CD4-positive, alpha-beta memory T cell (primary cell): ENCODE measurements at regions of chr4 and their contacts with region 1.

Region 1: DNA sequence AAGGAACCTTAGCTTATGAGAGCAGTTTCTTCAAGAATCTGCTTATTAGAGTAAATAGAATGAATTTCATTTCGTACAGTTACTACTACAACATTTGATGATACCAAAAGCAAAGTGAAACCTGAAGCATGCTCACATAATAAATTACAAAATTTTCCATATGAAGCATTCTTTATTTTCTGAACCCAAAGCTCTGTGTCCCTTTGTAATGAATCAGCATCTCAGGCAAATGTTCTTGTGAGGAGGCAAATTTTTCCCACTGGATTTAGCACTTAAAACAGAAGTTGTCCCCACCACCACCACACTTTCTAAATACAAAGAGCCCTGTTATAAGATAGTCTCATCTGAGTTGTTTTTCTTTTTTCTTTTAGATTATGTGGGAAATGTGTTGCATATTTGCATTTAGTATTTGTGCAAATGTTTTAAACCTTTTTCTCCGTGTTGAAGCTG is 70.7 kb upstream of the NFKB1 start:
- DNase-seq: no peak
- H3K4me3 ChIP-seq: peak overlapping the region; percentile 53 to 63
- H3K4me3 Mint-ChIP-seq: peak overlapping the region; percentile 85 to 92 (median 90)
- H3K27ac ChIP-seq: peak overlapping the region; percentile 49
- H3K27ac Mint-ChIP-seq: peak overlapping the region in 6 of 7 donors; percentile 77 to 95 (median 90)
- H3K4me1 ChIP-seq: peaks cover 5% of the 10 kb centered on the region
- H3K4me1 Mint-ChIP-seq: peaks cover 3 to 7% (median 4%) of the 10 kb centered on the region in 4 donors
- H3K27me3 ChIP-seq: no peaks in the 10 kb centered on the region
- H3K27me3 Mint-ChIP-seq: no peaks in the 10 kb centered on the region

Region 2: GRCh38 chr4:102344954-102345794 is 85.3 kb before region 1 on chr4 and contains the start of gene SLC39A8:
- CTCF ChIA-PET with region 1: interaction called, 26 read pairs
- POLR2A ChIA-PET with region 1: interaction called, 10 read pairs
- intact Hi-C with region 1: loop called (anchors 1 kb)
- DNase-seq: peak; percentile 86 to 95 (median 89)
- H3K4me3 ChIP-seq: peak within 1 kb of the TSS; percentile 80 to 83
- H3K4me3 Mint-ChIP-seq: peak within 1 kb of the TSS; percentile 86 to 95 (median 94)
- H3K27ac ChIP-seq: peak within 1 kb of the TSS; percentile 91
- H3K27ac Mint-ChIP-seq: peak within 1 kb of the TSS; percentile 86 to 99 (median 98)
- H3K4me1 ChIP-seq: peaks cover 47% of the 10 kb centered on the region
- H3K4me1 Mint-ChIP-seq: peaks cover 24 to 56% (median 42%) of the 10 kb centered on the region in 4 donors
- H3K27me3 ChIP-seq: no peaks in the 10 kb centered on the region
- H3K27me3 Mint-ChIP-seq: no peaks in the 10 kb centered on the region
- total RNA-seq, gene SLC39A8: 24.6 to 25.7 TPM

Region 3: DNA sequence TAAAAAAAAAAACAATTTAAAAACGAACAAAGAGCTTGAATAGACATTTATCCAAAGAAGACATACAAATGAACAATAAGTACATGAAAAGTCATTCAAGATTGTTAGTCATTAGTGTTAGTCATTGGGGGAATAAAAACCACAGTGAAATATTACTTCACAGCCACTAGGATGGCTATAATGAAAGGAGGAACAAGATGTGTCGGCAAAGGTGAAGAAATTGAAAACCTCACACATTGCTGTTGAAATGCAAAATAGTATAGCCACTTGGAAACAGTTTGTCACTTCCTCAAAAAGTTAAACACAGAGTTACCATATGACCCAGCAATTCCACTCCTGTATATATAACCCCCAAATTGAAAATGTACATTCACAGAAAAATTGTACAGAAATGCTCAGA is 40.0 kb before region 1 on chr4:
- CTCF ChIA-PET with region 1: no interaction called
- POLR2A ChIA-PET with region 1: no interaction called
- intact Hi-C with region 1: no loop called
- DNase-seq: no peak
- H3K4me3 ChIP-seq: no peak overlapping the region
- H3K4me3 Mint-ChIP-seq: no peak overlapping the region
- H3K27ac ChIP-seq: no peak overlapping the region
- H3K27ac Mint-ChIP-seq: no peak overlapping the region
- H3K4me1 ChIP-seq: no peaks in the 10 kb centered on the region
- H3K4me1 Mint-ChIP-seq: no peaks in the 10 kb centered on the region
- H3K27me3 ChIP-seq: no peaks in the 10 kb centered on the region
- H3K27me3 Mint-ChIP-seq: peaks cover 8 to 15% of the 10 kb centered on the region in 2 donors

Region 4: DNA sequence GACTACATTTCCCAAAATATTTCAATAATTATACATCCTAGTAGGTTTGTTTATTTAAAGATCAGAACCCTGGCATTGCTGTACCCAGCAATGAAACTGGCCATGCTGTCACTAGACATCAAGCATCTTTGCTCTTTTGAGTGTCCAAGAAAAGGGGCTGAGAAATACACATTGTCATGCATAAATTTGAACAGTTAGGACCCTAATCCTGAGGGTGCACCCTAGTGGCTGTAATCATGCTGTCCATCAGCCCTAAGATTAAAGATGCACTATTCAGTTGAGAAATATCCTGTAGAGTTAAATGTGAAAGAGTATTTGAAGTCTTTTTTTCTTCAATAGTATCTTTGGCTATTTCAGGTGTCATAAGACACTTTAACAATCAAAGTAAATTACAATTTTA is 179.5 kb after region 1 on chr4:
- CTCF ChIA-PET with region 1: interaction called, 10 read pairs
- POLR2A ChIA-PET with region 1: interaction called, 3 read pairs
- intact Hi-C with region 1: no loop called
- DNase-seq: no peak
- H3K4me3 ChIP-seq: no peak overlapping the region
- H3K4me3 Mint-ChIP-seq: peak overlapping the region in 5 of 8 donors; percentile 1 to 83 (median 44)
- H3K27ac ChIP-seq: no peak overlapping the region
- H3K27ac Mint-ChIP-seq: peak overlapping the region; percentile 18 to 99 (median 94)
- H3K4me1 ChIP-seq: peaks cover 84% of the 10 kb centered on the region
- H3K4me1 Mint-ChIP-seq: peaks cover 54 to 95% (median 76%) of the 10 kb centered on the region in 4 donors
- H3K27me3 ChIP-seq: no peaks in the 10 kb centered on the region
- H3K27me3 Mint-ChIP-seq: no peaks in the 10 kb centered on the region

Region 5: GRCh38 chr4:102760645-102761295 is 330.3 kb after region 1 on chr4 and contains the start of gene MANBA:
- CTCF ChIA-PET with region 1: interaction called, 8 read pairs
- POLR2A ChIA-PET with region 1: interaction called, 3 read pairs
- intact Hi-C with region 1: loop called (anchors 5 kb)
- DNase-seq: peak; percentile 78 to 84 (median 79)
- H3K4me3 ChIP-seq: peak within 1 kb of the TSS; percentile 77 to 89
- H3K4me3 Mint-ChIP-seq: peak within 1 kb of the TSS; percentile 92 to 99 (median 98)
- H3K27ac ChIP-seq: peak within 1 kb of the TSS; percentile 65
- H3K27ac Mint-ChIP-seq: peak within 1 kb of the TSS; percentile 75 to 96 (median 94)
- H3K4me1 ChIP-seq: peaks cover 18% of the 10 kb centered on the region
- H3K4me1 Mint-ChIP-seq: peaks cover 24 to 47% (median 36%) of the 10 kb centered on the region in 4 donors
- H3K27me3 ChIP-seq: no peaks in the 10 kb centered on the region
- H3K27me3 Mint-ChIP-seq: peaks cover 0 to 3% of the 10 kb centered on the region in 2 donors
- total RNA-seq, gene MANBA: 30.0 to 33.2 TPM

Region 6: GRCh38 chr4:103008875-103009729 is 578.6 kb after region 1 on chr4:
- CTCF ChIA-PET with region 1: interaction called, 11 read pairs
- POLR2A ChIA-PET with region 1: interaction called, 3 read pairs
- intact Hi-C with region 1: loop called (anchors 1 kb)
- DNase-seq: peak; percentile 35 to 61 (median 59)
- H3K4me3 ChIP-seq: no peak overlapping the region
- H3K4me3 Mint-ChIP-seq: no peak overlapping the region
- H3K27ac ChIP-seq: no peak overlapping the region
- H3K27ac Mint-ChIP-seq: no peak overlapping the region
- H3K4me1 ChIP-seq: no peaks in the 10 kb centered on the region
- H3K4me1 Mint-ChIP-seq: peaks cover 0 to 2% (median 1%) of the 10 kb centered on the region in 4 donors
- H3K27me3 ChIP-seq: no peaks in the 10 kb centered on the region
- H3K27me3 Mint-ChIP-seq: peaks cover 0 to 1% of the 10 kb centered on the region in 2 donors

Region 7: GRCh38 chr4:103099691-103100392 is 669.4 kb after region 1 on chr4 and contains the start of gene BDH2:
- CTCF ChIA-PET with region 1: interaction called, 15 read pairs
- POLR2A ChIA-PET with region 1: no interaction called
- intact Hi-C with region 1: loop called (anchors 1 kb)
- DNase-seq: peak; percentile 77 to 84 (median 82)
- H3K4me3 ChIP-seq: peak within 1 kb of the TSS; percentile 4 to 54
- H3K4me3 Mint-ChIP-seq: peak within 1 kb of the TSS; percentile 81 to 97 (median 92)
- H3K27ac ChIP-seq: peak within 1 kb of the TSS; percentile 42
- H3K27ac Mint-ChIP-seq: peak within 1 kb of the TSS; percentile 59 to 95 (median 89)
- H3K4me1 ChIP-seq: peaks cover 14% of the 10 kb centered on the region
- H3K4me1 Mint-ChIP-seq: peaks cover 12 to 34% (median 24%) of the 10 kb centered on the region in 4 donors
- H3K27me3 ChIP-seq: no peaks in the 10 kb centered on the region
- H3K27me3 Mint-ChIP-seq: no peaks in the 10 kb centered on the region
- total RNA-seq, gene BDH2: 20.1 to 20.5 TPM